Activated CD4-positive, alpha-beta memory T cell treated with anti-CD3 and anti-CD28 coated beads for 36 hours (primary cell): ENCODE measurements at regions of chr10 and their contacts with region 1.

Region 1: GRCh38 chr10:52215745-52216361 is 98.2 kb upstream of the DKK1 start:
- DNase-seq: peak; percentile 31
- H3K4me3 Mint-ChIP-seq: no peak overlapping the region
- H3K27ac Mint-ChIP-seq: no peak overlapping the region
- H3K4me1 Mint-ChIP-seq: no peaks in the 10 kb centered on the region
- H3K27me3 Mint-ChIP-seq: no peaks in the 10 kb centered on the region

Region 2: GRCh38 chr10:51001587-51001986 is 1214.3 kb before region 1 on chr10:
- CTCF ChIA-PET with region 1: interaction called, 3 read pairs
- POLR2A ChIA-PET with region 1: no interaction called
- intact Hi-C with region 1: loop called (anchors 1 kb)
- DNase-seq: no peak
- H3K4me3 Mint-ChIP-seq: no peak overlapping the region
- H3K27ac Mint-ChIP-seq: no peak overlapping the region
- H3K4me1 Mint-ChIP-seq: no peaks in the 10 kb centered on the region
- H3K27me3 Mint-ChIP-seq: peaks cover 4% of the 10 kb centered on the region

Region 3: DNA sequence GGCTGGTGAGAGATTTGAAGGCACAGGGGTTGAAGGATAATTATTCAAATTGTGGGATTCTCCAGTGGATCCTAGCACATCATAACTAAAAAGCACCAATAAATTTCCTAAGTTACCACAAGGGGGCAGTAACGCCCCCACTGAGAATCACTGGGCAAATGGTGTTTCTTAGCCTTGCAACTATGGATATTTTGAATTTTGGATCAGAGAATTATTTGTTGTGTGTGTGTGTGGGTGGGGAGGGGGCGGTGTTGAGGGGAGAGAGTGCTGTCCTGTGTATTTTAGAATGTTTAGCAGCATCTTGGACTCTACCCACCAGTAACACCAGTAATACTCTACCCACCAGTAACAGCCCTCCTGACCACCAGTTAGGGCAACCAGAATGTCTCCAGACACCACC is 1204.9 kb before region 1 on chr10:
- CTCF ChIA-PET with region 1: no interaction called
- POLR2A ChIA-PET with region 1: no interaction called
- intact Hi-C with region 1: loop called (anchors 1 kb)
- DNase-seq: peak; percentile 12
- H3K4me3 Mint-ChIP-seq: no peak overlapping the region
- H3K27ac Mint-ChIP-seq: no peak overlapping the region
- H3K4me1 Mint-ChIP-seq: no peaks in the 10 kb centered on the region
- H3K27me3 Mint-ChIP-seq: peaks cover 14% of the 10 kb centered on the region

Region 4: GRCh38 chr10:51389415-51390321 is 826.2 kb before region 1 on chr10:
- CTCF ChIA-PET with region 1: interaction called, 12 read pairs
- POLR2A ChIA-PET with region 1: no interaction called
- intact Hi-C with region 1: no loop called
- DNase-seq: peak; percentile 55
- H3K4me3 Mint-ChIP-seq: no peak overlapping the region
- H3K27ac Mint-ChIP-seq: no peak overlapping the region
- H3K4me1 Mint-ChIP-seq: no peaks in the 10 kb centered on the region
- H3K27me3 Mint-ChIP-seq: no peaks in the 10 kb centered on the region

Region 5: DNA sequence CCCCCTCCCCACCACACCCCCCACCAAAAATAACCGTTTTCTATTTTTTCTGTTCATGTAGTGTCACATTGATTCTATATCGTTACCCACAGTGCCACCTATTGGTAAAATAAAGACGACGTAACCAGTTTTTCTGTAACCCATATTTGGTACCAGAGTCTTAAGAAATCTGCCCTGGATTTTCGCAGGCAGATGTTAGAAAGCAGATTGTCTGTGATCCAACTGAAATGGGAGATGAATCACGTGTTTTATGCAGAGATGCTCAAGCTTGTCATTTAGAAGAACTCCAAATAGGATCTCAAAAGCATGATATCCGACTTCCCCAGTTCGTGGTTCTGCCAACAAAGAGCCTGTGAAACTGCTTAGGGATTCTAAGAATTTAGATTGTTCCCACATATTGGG is 255.4 kb before region 1 on chr10:
- CTCF ChIA-PET with region 1: interaction called, 3 read pairs
- POLR2A ChIA-PET with region 1: no interaction called
- intact Hi-C with region 1: loop called (anchors 5 kb)
- DNase-seq: no peak
- H3K4me3 Mint-ChIP-seq: no peak overlapping the region
- H3K27ac Mint-ChIP-seq: no peak overlapping the region
- H3K4me1 Mint-ChIP-seq: no peaks in the 10 kb centered on the region
- H3K27me3 Mint-ChIP-seq: peaks cover 14% of the 10 kb centered on the region